PC-3 (cell line): ENCODE measurements at regions of chr14 and their contacts with region 1.

Region 1: GRCh38 chr14:54347997-54348611 is 48.7 kb upstream of the CDKN3 start:
- DNase-seq: peak; percentile 99
- ATAC-seq: peak; percentile 70
- H3K4me3 ChIP-seq: no peak overlapping the region
- H3K27ac ChIP-seq: no peak overlapping the region
- H3K4me1 ChIP-seq: peaks cover 19% of the 10 kb centered on the region
- H3K27me3 ChIP-seq: no peaks in the 10 kb centered on the region
- CTCF ChIP-seq: peak; percentile 99

Region 2: DNA sequence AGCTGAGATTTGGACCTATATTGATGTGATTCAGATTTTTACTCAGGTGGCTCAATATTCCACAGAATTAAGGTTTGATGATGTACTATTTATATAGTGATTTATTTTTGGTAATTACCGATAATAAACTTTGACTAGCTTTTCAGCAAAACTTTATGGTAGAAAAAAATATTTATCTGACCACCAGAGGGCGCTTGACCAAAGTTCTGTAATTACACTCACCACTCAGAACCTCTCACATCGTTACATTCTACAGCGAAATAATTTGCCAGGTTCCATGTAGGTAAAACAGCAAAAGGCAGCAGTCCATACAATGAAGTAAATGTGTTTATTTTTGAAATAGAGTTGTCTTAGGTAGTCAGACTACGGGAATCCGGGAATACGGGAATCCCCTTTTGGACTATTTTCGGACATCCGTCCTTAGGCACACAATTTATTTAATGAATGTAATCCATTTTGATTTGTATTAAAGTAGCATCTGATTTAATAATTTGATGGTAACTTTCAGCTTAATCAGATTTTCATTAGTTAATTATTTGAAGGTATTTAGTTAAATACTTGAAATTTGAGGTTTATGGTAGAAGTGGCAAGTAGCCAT is 1052.0 kb before region 1 on chr14:
- CTCF ChIA-PET with region 1: interaction called, 10 read pairs
- POLR2A ChIA-PET with region 1: interaction called, 11 read pairs
- intact Hi-C with region 1: loop called (anchors 1 kb)
- DNase-seq: peak; percentile 67
- ATAC-seq: peak; percentile 71
- H3K4me3 ChIP-seq: no peak overlapping the region
- H3K27ac ChIP-seq: no peak overlapping the region
- H3K4me1 ChIP-seq: no peaks in the 10 kb centered on the region
- H3K27me3 ChIP-seq: no peaks in the 10 kb centered on the region
- CTCF ChIP-seq: peak; percentile 85

Region 3: GRCh38 chr14:53432378-53432802 is 915.7 kb before region 1 on chr14:
- CTCF ChIA-PET with region 1: interaction called, 6 read pairs
- POLR2A ChIA-PET with region 1: no interaction called
- intact Hi-C with region 1: loop called (anchors 1 kb)
- DNase-seq: peak; percentile 77
- ATAC-seq: peak; percentile 95
- H3K4me3 ChIP-seq: no peak overlapping the region
- H3K27ac ChIP-seq: no peak overlapping the region
- H3K4me1 ChIP-seq: peaks cover 18% of the 10 kb centered on the region
- H3K27me3 ChIP-seq: no peaks in the 10 kb centered on the region
- CTCF ChIP-seq: peak; percentile 96

Region 4: DNA sequence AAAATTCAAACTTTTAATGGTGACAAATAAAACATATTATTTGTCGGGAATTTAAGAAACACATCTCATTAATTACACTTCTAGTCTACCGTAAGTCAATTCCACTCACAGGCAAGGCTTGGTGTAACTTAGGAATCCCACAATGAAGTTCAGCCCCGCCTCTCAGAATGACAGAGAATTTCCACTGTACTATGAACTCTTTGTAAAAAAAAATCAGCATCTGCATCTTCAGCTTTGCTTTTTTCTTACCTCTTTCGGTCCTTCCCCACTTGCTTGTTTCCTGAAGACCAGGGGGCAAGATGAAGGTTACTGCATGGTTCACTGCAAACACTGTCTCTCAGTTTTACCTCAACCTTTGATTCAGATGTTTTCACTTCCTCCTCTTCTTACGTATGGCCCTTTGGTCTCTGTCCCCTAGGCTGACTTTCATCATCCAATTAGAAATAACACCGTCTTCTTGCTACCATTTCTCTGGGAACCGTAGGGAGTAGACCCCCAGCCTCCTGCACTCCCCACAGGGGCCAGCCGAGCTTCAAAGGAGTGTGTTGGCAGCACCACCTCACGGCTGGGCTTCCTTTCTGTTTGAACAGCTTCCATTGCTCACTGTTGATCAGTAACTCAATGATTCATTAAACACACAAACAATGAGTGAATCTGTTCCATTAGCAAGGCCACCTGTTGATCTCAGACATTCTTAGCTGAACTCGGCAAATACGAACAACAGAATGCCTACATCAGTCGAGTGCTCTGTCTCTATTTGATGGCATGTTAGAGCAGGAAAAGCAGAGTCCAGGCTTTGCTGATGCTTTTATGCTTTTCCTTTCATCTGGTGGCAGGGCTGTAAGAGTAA is 734.5 kb before region 1 on chr14:
- CTCF ChIA-PET with region 1: interaction called, 4 read pairs
- POLR2A ChIA-PET with region 1: no interaction called
- intact Hi-C with region 1: loop called (anchors 10 kb)
- DNase-seq: peak; percentile 92
- ATAC-seq: peak; percentile 98
- H3K4me3 ChIP-seq: peak overlapping the region; percentile 46
- H3K27ac ChIP-seq: peak overlapping the region; percentile 30
- H3K4me1 ChIP-seq: peaks cover 18% of the 10 kb centered on the region
- H3K27me3 ChIP-seq: no peaks in the 10 kb centered on the region
- CTCF ChIP-seq: peak; percentile 40; the same call in 1 of the 2 replicates

Region 5: GRCh38 chr14:54085232-54085761 is 262.8 kb before region 1 on chr14:
- CTCF ChIA-PET with region 1: no interaction called
- POLR2A ChIA-PET with region 1: no interaction called
- intact Hi-C with region 1: loop called (anchors 1 kb)
- DNase-seq: no peak
- ATAC-seq: no peak
- H3K4me3 ChIP-seq: no peak overlapping the region
- H3K27ac ChIP-seq: no peak overlapping the region
- H3K4me1 ChIP-seq: no peaks in the 10 kb centered on the region
- H3K27me3 ChIP-seq: no peaks in the 10 kb centered on the region
- CTCF ChIP-seq: no peak

Region 6: DNA sequence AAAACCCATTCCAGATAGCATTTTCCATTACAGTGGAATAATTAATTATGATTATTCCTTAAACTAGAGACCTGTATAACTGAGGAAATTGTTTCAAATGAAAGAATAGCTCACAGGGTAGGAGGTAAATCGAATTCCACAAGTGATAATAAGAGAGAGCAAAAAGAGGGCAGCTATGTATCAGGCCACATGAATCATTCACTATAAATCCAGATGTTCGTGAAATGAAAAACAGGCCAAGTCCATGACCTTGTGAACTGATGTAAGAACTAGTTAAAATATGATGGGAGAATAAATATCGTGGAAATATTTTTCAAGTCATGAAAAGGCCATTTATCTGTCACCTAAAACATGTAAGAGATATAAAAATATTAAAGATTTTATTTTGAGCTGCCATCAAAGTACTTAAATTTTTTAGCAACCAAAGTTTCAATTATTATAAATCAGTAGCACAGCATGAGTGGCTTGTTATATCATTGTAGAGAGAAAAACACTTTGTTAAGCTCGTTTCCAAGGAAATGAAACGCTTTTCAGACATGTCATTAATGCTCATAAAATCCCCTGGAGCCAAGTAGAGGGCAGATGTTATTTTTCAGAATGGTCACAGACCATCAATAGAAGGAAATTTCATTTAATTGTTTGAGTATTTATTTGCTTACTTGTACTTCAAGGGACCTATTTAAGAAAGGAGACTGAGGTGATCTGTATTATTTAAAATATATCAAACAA is 71.9 kb before region 1 on chr14:
- CTCF ChIA-PET with region 1: no interaction called
- POLR2A ChIA-PET with region 1: no interaction called
- intact Hi-C with region 1: no loop called
- DNase-seq: no peak
- ATAC-seq: no peak
- H3K4me3 ChIP-seq: no peak overlapping the region
- H3K27ac ChIP-seq: no peak overlapping the region
- H3K4me1 ChIP-seq: no peaks in the 10 kb centered on the region
- H3K27me3 ChIP-seq: no peaks in the 10 kb centered on the region
- CTCF ChIP-seq: no peak

Region 7: DNA sequence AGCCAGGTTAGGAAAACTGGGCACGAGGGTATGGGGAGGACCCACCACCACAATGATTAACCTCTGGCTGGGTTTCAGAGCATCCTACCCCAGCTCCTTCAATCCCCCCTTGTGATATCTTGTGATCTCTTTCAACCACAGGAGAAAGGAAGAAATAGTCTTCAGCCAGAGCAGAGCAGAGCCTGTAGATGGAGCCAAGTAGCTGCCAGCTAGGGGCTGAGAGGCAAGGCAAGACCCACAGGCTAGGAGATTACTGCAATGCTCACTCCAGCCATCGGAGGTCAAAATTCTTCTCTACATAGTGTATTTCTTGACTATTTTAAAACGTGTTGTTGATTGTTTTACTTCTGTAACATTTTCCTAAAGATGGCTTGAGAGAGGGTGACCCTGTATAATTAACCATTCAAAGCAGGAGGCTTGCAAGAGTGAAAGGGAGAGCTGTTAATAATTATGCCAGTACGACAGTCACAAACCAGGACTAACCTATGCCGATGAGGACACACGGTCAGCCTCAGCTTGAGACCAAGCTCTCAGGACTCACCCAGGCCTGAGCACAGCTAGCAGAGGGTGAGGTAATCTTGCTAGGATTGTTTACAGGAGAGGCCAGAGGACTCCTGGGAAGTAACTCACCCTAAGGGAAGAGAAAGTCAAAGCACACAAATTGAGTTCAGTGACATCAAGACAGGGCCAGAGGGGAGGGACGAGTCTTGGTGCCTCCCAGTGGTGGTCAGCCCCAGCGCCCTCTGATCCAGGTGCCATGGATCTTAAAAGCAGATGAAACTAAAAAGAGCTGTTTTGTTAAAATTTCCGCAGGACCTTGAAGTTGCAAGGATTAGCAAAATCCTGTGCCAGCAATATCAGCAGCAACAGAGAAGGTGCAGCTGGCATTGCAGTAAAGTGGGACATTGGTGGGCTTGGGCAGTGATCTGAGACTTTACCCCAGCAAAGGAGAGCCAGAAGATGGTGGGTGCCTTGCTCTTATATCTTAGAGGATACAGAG is 18.9 kb after region 1 on chr14:
- CTCF ChIA-PET with region 1: interaction called, 18 read pairs
- POLR2A ChIA-PET with region 1: no interaction called
- intact Hi-C with region 1: no loop called
- DNase-seq: peak; percentile 88
- ATAC-seq: peak; percentile 71
- H3K4me3 ChIP-seq: no peak overlapping the region
- H3K27ac ChIP-seq: no peak overlapping the region
- H3K4me1 ChIP-seq: peaks cover 60% of the 10 kb centered on the region
- H3K27me3 ChIP-seq: no peaks in the 10 kb centered on the region
- CTCF ChIP-seq: peak; percentile 98

Region 8: DNA sequence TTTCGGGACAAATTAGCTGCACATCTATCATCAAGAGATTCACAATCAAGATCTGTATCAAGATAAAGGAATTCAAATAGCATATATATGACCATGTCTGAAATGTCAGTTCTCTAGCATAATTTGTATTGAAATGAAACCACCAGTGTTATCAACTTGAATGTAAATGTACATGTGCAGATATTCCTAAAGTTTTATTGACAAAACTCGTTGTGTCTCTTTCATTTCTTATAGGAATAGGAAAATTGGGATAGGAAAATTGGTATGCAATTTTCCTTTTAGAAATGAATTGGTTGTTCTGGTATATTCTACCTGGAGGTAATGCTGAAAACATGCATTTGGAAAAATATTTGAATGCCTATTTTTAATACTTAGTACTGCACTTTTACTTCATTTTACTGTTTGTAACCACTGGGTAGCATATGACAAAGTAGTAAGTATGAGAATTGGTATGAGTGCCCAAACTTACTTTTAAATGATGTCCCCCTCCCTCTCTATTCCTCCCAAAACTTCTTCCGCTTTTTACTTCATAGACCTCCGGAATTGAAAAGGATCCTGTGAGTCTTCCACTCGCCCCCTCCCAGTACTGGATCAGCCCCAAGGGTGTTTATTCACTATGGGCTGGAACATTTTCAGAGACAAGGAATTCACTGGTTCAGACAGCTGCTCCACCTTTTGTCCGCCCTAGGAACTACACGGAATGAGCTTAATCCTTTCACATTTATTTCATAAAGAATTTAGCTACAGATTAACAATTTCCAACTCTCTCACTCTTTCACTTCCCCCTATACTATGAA is 72.1 kb after region 1 on chr14:
- CTCF ChIA-PET with region 1: interaction called, 39 read pairs
- POLR2A ChIA-PET with region 1: no interaction called
- intact Hi-C with region 1: loop called (anchors 1 kb)
- DNase-seq: peak; percentile 89
- ATAC-seq: peak; percentile 82
- H3K4me3 ChIP-seq: no peak overlapping the region
- H3K27ac ChIP-seq: no peak overlapping the region
- H3K4me1 ChIP-seq: no peaks in the 10 kb centered on the region
- H3K27me3 ChIP-seq: no peaks in the 10 kb centered on the region
- CTCF ChIP-seq: peak; percentile 96

Region 9: GRCh38 chr14:55180434-55180833 is 832.3 kb after region 1 on chr14:
- CTCF ChIA-PET with region 1: no interaction called
- POLR2A ChIA-PET with region 1: no interaction called
- intact Hi-C with region 1: no loop called
- DNase-seq: no peak
- ATAC-seq: no peak
- H3K4me3 ChIP-seq: no peak overlapping the region
- H3K27ac ChIP-seq: no peak overlapping the region
- H3K4me1 ChIP-seq: no peaks in the 10 kb centered on the region
- H3K27me3 ChIP-seq: no peaks in the 10 kb centered on the region
- CTCF ChIP-seq: no peak